ENCODE measurements at regions of chr7 and their contacts with region 1.

Region 1: GRCh38 chr7:66837007-66837406 is 84.0 kb upstream of the TMEM248 start:
- DNase-seq: peak; percentile 20
- H3K4me3 ChIP-seq: no peak overlapping the region
- H3K27ac ChIP-seq: no peak overlapping the region
- H3K4me1 ChIP-seq: no peaks in the 10 kb centered on the region
- H3K27me3 ChIP-seq: no peaks in the 10 kb centered on the region
- CTCF ChIP-seq: peak; percentile 37 to 53
- POLR2A ChIP-seq: no peak

Region 2: GRCh38 chr7:66952343-66953043 is 115.5 kb after region 1 on chr7:
- CTCF ChIA-PET with region 1: no interaction called
- POLR2A ChIA-PET with region 1: no interaction called
- dilution Hi-C with region 1: no loop called
- intact Hi-C with region 1: loop called (anchors 1 kb)
- DNase-seq: peak; percentile 68
- H3K4me3 ChIP-seq: no peak overlapping the region
- H3K27ac ChIP-seq: peak overlapping the region; percentile 83
- H3K4me1 ChIP-seq: peaks cover 36% of the 10 kb centered on the region
- H3K27me3 ChIP-seq: no peaks in the 10 kb centered on the region
- CTCF ChIP-seq: no peak
- POLR2A ChIP-seq: no peak

Measured in endothelial cell of umbilical vein (primary cell).